ENCODE measurements at regions of chr15 and their contacts with region 1.

Region 1: DNA sequence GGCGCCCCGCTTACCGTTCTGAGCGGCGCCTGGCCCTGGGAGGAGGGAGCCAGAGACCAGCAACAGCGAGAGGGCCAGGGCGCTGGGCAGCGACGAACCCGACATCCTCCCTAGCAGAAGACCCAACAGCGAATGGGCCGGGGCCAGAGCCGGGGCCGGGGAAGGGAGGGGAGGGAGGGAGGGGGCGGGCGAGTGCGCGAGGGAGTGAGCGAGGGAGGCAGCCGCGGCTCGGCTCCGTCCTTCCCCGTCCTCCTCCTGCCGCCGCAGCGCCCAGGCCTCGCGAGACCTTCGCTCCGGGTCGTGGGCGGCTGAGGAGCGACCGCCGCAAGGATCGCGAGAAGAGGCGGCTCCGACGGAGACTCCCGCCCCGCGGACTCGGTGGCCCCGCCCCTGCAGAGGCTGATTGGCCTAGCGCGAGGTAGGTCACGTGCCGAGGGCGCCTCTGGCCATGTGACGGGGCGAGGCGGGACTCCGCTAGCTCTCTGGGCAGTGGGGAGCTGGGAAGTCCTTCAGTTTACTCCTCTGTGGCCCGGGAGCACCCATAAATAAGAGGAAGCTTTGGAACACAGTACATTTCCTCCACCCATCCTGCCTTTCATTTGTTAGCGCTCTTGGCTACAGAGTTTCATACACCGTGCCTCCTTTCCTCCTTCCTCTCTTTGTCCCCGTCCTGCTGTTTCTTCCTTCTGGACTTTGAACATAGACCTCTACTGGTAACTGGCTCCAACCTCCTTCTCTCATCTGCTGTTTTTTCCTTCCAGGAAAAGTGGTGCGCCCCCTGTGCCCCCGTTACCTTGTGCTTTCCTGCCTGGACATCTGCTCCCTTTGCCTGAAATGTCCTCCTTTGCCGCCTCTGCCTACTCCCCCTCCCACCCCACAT is at the start of gene NPTN:
- DNase-seq: peak; percentile 97
- ATAC-seq: peak; percentile 84 to 88
- H3K4me3 ChIP-seq: peak within 1 kb of the TSS; percentile 83 to 97 (median 90)
- H3K27ac ChIP-seq: peak within 1 kb of the TSS; percentile 89 to 96 (median 94)
- H3K4me1 ChIP-seq: peaks cover 42% of the 10 kb centered on the region in 2 donors
- H3K27me3 ChIP-seq: no peaks in the 10 kb centered on the region
- CTCF ChIP-seq: no peak
- POLR2A ChIP-seq: peak; percentile 77 to 84
- total RNA-seq, gene NPTN: 26.5 to 32.9 (median 29.7) TPM

Region 2: DNA sequence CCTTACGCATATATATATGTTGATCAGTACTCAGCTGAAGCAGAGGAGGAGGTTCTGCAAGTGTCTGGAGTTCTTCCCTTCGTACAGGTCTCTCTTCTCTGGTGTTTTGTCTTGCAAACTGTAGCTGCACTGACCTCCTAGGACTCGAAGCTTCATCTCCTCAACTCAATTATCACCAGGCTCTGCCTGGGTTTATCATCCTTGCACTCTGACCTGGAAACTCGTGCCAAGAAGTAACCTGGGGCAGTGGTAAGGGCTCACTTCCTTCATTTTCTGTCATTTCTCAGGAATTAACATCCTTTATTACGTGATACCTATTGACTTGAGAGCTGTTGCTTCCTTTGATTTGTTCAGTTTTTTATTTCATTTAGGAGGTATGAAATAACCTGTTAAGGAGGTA is 176.0 kb before region 1 on chr15:
- in situ Hi-C with region 1: no loop called
- intact Hi-C with region 1: no loop called
- DNase-seq: no peak
- ATAC-seq: no peak
- H3K4me3 ChIP-seq: no peak overlapping the region
- H3K27ac ChIP-seq: no peak overlapping the region
- H3K4me1 ChIP-seq: no peaks in the 10 kb centered on the region
- H3K27me3 ChIP-seq: no peaks in the 10 kb centered on the region
- CTCF ChIP-seq: no peak
- POLR2A ChIP-seq: no peak

Region 3: DNA sequence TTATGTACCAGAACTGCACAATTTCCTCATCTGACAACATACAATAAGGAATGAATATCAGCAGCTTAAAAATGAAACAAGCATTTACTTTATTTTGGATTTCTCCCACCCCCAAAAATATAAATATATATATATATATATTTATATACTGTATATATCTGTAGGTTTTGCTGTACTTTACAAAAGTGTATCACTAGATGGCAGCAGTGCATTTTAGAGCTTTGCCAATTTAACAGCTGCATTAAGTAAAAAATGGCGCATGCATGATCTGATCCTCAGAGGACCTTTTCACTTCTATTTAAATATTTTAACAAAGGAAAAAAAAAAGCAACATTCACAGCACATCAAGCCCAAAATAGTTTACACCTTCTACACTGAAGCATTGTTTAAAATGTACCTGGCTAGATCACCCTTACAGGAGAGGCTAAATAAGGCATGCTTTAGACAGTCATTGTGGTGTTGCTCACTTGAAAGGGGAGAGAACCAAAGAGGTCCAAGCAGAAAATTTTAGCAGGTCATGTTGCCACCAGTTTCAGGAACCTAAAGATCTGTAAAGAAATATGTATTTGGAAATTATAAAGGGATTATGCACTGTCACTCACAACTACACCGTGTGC is 72.7 kb before region 1 on chr15:
- in situ Hi-C with region 1: loop called in 3 of 4 experiments (anchors 5 kb)
- intact Hi-C with region 1: loop called (anchors 1 kb)
- DNase-seq: no peak
- ATAC-seq: peak in 1 of 2 donors; percentile 54
- H3K4me3 ChIP-seq: no peak overlapping the region
- H3K27ac ChIP-seq: no peak overlapping the region
- H3K4me1 ChIP-seq: peaks cover 0 to 11% of the 10 kb centered on the region in 2 donors
- H3K27me3 ChIP-seq: no peaks in the 10 kb centered on the region
- CTCF ChIP-seq: peak in 3 of 5 experiments; percentile 23 to 68 (median 58)
- POLR2A ChIP-seq: no peak

Region 4: DNA sequence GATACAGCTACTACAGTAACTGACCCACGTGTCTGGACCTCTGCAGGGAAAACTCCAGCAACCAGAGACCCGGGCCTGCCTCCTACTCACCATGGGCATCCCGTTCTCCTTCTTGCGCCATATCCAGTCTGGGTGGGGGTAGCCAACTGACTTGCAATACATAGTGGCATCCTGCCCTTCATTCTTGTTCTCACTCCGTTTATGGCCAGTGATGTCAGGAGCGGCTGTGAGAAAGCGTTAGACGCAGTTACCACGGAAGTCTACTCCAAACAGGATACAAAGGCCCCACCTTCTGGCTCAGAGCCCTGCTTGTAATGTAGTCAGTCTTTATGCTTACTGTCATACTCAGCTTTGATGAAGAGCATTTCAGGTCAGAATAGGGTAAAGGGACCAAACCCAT is 59.8 kb before region 1 on chr15:
- in situ Hi-C with region 1: loop called in 1 of 4 experiments (anchors 5 kb)
- intact Hi-C with region 1: no loop called
- DNase-seq: no peak
- ATAC-seq: no peak
- H3K4me3 ChIP-seq: no peak overlapping the region
- H3K27ac ChIP-seq: no peak overlapping the region
- H3K4me1 ChIP-seq: peaks cover 0 to 14% of the 10 kb centered on the region in 2 donors
- H3K27me3 ChIP-seq: no peaks in the 10 kb centered on the region
- CTCF ChIP-seq: no peak
- POLR2A ChIP-seq: no peak

Region 5: DNA sequence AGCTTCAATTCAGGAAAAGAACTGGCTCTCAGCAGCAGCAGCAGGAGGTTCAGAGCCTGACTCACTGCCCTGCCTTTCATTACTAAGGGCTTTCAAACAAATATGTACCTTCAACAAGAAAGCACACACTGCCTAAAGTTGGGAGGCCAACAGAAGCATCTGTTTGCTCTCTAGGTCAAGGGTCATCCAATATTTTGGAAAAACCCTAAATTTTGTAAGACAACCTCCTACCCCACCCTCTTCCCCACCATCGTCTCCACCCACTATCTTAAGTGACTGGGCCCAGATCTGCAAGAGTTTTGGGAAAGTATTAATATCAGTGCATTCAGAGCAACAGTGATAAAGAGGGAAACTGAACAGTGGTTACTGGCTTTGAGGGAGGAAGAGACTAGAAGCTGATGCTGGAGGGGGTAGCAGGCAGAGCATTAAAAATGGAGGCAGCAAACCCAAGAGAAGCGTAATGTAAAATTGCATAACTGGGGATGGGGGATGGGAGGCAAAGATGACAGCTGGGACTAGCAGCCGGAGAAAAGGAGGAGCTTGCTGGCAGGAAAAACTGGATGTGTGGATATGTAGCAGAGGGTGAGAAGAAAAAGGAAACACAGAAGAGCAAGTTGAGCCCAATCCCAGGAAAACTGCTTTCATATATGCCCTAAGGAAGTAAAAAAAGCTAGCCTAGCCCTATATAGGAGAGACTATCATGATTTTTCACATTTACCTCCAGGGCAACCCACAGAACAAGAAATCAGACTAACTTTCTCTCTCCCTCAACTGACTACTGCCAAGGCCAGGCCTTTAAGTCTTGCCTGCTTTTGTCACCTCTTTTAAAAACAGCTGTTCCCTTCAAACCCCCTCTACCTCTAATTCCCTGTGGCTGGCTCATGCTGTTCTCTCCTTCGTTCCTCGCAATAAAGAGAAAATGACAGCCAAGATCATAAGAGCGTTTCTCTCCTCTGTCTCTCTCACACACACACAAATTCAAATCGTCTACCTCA is 31.6 kb before region 1 on chr15:
- in situ Hi-C with region 1: no loop called
- intact Hi-C with region 1: loop called (anchors 2 kb)
- DNase-seq: peak; percentile 47 to 73
- ATAC-seq: peak; percentile 82 to 95
- H3K4me3 ChIP-seq: no peak overlapping the region
- H3K27ac ChIP-seq: peak overlapping the region; percentile 70 to 81 (median 77)
- H3K4me1 ChIP-seq: peaks cover 74 to 94% of the 10 kb centered on the region in 2 donors
- H3K27me3 ChIP-seq: no peaks in the 10 kb centered on the region
- CTCF ChIP-seq: no peak
- POLR2A ChIP-seq: no peak

Region 6: GRCh38 chr15:73683777-73684580 is 50.6 kb after region 1 on chr15 and contains the start of gene CD276:
- in situ Hi-C with region 1: no loop called
- intact Hi-C with region 1: loop called (anchors 5 kb)
- DNase-seq: peak; percentile 73 to 79
- ATAC-seq: peak; percentile 71 to 81
- H3K4me3 ChIP-seq: peak within 1 kb of the TSS; percentile 71 to 93 (median 76)
- H3K27ac ChIP-seq: peak within 1 kb of the TSS; percentile 79 to 92 (median 84)
- H3K4me1 ChIP-seq: peaks cover 22 to 35% of the 10 kb centered on the region in 2 donors
- H3K27me3 ChIP-seq: no peaks in the 10 kb centered on the region
- CTCF ChIP-seq: peak in 1 of 5 experiments; percentile 34
- POLR2A ChIP-seq: peak; percentile 56
- total RNA-seq, gene CD276: 9.6 to 21.4 (median 16.6) TPM

Region 7: DNA sequence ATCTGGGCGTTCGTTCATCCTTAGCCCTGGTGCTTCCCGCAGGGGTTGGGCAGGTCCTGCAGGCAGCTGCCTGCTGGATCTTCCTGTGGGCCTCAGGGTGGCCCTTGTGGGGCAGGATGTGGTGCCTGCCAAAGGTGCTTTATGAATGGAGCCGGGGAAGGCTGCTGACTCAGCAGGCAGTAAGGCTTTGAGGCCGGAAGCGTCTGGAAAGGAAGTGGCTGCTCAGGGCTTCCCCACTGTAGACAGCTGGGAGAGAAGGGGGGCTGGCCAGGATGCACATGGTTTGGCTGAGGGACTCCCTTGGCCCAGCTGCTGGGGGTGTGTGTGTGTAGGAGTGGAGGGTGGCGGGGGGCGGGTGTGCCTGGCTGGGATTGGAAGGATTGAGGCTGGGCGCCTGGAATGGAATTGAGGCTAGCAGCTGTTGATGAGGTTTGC is 63.7 kb after region 1 on chr15:
- in situ Hi-C with region 1: loop called in 3 of 4 experiments (anchors 5 to 10 kb)
- intact Hi-C with region 1: loop called (anchors 1 kb)
- DNase-seq: peak; percentile 64 to 77
- ATAC-seq: peak; percentile 62 to 70
- H3K4me3 ChIP-seq: no peak overlapping the region
- H3K27ac ChIP-seq: peak overlapping the region; percentile 30 to 68 (median 50)
- H3K4me1 ChIP-seq: peaks cover 36 to 39% of the 10 kb centered on the region in 2 donors
- H3K27me3 ChIP-seq: no peaks in the 10 kb centered on the region
- CTCF ChIP-seq: no peak
- POLR2A ChIP-seq: no peak